ENCODE measurements at regions of chr19 and their contacts with region 1.

Region 1: DNA sequence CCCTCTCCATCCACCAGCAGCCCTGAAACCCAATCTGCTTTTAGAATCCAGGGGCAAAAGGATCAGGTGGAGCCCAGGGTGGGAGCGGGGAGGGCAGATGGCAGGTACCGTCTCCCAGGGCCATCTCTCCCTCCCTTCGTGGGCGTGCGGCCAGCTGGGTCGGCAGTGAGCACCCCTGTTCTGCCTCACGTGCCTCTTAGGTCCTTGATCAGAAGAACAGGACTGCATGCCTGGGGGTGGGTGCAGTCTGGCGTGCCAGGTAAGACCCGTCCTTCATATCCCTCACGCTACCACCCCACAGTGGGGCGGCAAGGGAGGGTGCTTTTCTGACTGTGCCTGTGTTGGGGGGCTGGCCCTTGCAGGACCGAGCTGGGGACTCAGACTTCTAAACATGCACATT is 2.0 kb downstream of the SLC8A2 start:
- DNase-seq: no peak
- H3K4me3 ChIP-seq: no peak overlapping the region
- H3K27ac ChIP-seq: peak overlapping the region in 1 of 2 donors; percentile 6
- H3K4me1 ChIP-seq: peaks cover 0 to 5% of the 10 kb centered on the region in 2 donors
- H3K27me3 ChIP-seq: no peaks in the 10 kb centered on the region
- CTCF ChIP-seq: no peak
- POLR2A ChIP-seq: no peak

Region 2: GRCh38 chr19:47381653-47382279 is 88.0 kb before region 1 on chr19:
- intact Hi-C with region 1: loop called (anchors 5 kb)
- DNase-seq: no peak
- H3K4me3 ChIP-seq: no peak overlapping the region
- H3K27ac ChIP-seq: no peak overlapping the region
- H3K4me1 ChIP-seq: no peaks in the 10 kb centered on the region
- H3K27me3 ChIP-seq: no peaks in the 10 kb centered on the region
- CTCF ChIP-seq: no peak
- POLR2A ChIP-seq: no peak

Region 3: DNA sequence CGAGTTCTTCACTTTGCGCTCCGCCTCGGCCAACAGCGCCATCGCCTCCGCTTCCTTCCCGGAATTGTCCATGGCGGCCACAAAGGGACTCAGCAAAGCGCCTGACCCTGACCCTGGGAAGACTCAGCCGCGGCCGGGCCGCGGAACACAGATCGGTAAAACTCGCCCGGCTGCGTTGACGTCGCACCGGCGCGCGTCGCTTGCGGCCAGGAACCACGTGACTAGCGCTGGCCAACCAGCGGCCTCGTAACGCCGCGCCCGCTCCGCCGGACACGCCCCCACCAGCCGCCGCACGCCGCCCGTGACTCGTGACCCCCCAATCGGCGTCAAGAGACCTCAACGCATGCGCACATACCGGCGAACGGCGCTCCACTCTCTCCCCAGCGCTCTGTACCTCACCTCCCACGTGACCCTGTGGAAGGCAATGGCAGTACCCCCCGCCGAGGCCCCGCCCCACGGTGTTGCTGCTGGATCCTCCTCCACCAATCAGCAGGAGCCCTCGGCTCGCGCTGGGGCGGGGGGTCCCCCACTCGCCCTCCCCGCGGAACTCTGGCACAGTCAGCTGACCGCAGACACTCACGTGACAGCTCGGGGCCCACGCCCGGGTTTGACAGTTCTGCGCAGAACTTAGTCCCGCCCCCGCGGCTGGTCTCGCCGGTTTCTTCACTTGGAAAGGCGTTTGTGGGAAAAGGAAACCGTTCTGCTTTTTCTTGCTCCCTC is 45.3 kb after region 1 on chr19 and contains the start of gene NAPA:
- intact Hi-C with region 1: no loop called
- DNase-seq: peak; percentile 100
- H3K4me3 ChIP-seq: peak within 1 kb of the TSS; percentile 85 to 91
- H3K27ac ChIP-seq: peak within 1 kb of the TSS; percentile 96 to 98
- H3K4me1 ChIP-seq: peaks cover 8 to 29% of the 10 kb centered on the region in 2 donors
- H3K27me3 ChIP-seq: no peaks in the 10 kb centered on the region
- CTCF ChIP-seq: peak in 1 of 4 experiments; percentile 99
- POLR2A ChIP-seq: peak; percentile 84 to 94
- total RNA-seq, gene NAPA: 36.5 to 693 (median 144) TPM

Region 4: GRCh38 chr19:47549261-47549862 is 79.6 kb after region 1 on chr19:
- intact Hi-C with region 1: no loop called
- DNase-seq: no peak
- H3K4me3 ChIP-seq: no peak overlapping the region
- H3K27ac ChIP-seq: no peak overlapping the region
- H3K4me1 ChIP-seq: peaks cover 0 to 6% of the 10 kb centered on the region in 2 donors
- H3K27me3 ChIP-seq: no peaks in the 10 kb centered on the region
- CTCF ChIP-seq: no peak
- POLR2A ChIP-seq: no peak

Region 5: DNA sequence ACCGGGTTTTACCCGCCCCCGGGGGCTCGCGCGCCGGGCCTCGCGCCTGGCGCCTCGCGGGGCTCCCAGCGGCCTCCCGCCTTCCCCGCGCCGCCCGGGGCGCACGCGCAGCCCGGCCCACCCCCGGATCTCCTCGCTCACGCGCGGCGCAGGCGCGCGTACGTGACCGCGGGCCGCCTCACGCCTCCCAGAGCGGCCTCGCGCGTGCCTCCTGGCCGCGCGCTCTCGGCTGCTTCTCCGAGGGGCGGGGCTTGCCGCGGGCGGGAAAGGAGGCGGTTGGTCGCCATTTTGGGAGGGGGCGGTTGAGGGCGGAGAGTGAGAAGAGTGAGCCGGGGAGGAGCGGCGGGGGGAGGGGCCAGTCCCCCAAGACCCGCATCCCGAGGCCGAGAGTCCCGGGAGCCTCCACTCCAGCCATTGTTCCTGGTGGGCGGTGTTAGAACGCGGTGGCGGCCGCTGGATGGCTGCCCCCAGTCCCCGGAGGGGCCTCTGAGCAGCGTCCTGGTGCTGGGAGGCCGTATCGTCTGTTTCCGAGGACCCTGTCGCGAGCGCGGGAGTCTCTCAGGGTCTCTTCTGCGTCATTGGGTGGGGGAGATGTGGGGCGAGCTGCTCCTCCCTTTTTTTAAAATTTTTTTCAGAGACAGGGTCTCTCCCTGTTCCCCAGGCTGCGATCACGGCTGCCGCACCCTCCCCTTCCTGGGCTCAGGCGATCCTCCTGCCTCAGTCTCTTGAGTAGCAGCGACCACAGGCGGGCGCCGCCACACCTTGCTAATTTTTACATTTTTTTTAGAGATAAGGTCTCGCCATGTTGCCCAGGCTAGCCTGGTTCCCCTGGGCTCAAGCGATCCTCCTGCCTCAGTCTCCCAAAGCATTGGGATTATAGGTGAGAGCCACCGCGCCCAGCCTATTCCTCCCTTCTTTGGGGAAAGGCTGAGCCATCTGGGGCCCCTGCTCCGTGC is 103.6 kb after region 1 on chr19 and contains the start of gene ZNF541:
- intact Hi-C with region 1: no loop called
- DNase-seq: peak; percentile 31 to 41
- H3K4me3 ChIP-seq: peak within 1 kb of the TSS in 1 of 2 donors; percentile 16
- H3K27ac ChIP-seq: no peak within 1 kb of the TSS
- H3K4me1 ChIP-seq: no peaks in the 10 kb centered on the region
- H3K27me3 ChIP-seq: no peaks in the 10 kb centered on the region
- CTCF ChIP-seq: no peak
- POLR2A ChIP-seq: no peak
- total RNA-seq, gene ZNF541: 0.90 to 1.2 TPM in 2 of 4 donors, not detected in the others

Region 6: DNA sequence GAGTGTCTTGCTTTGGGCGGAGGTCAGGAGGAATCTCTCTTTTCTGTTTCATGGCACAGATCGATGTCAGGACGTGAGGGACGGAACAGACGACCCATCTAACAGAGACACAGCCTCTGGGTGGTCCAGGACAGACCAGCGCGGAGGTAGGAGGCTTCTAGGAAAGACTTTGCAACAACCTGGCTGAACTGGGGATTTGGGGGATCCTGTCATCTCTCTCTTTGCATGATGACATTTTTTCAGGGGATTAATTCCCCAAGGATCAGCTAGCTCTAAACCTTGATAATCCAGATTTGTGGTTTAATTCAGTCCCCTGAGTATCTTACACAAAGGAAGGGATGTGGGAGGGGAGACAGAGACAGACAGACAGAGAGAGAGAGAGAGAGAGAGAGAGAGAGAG is 559.7 kb after region 1 on chr19:
- intact Hi-C with region 1: no loop called
- DNase-seq: no peak
- H3K4me3 ChIP-seq: no peak overlapping the region
- H3K27ac ChIP-seq: no peak overlapping the region
- H3K4me1 ChIP-seq: no peaks in the 10 kb centered on the region
- H3K27me3 ChIP-seq: no peaks in the 10 kb centered on the region
- CTCF ChIP-seq: no peak
- POLR2A ChIP-seq: no peak

Measured in uterus (tissue), 4 donors.